Activated T-helper 1 cell treated with anti-CD3 and anti-CD28 coated beads, Interleukin-12 subunit alpha, Interleukin-12 subunit beta, Interleukin-2, Interleukin-4 antibody, amounts not matched to agents 30 ng/mL and 10 ng/mL and 1 ng/mL, durations not matched to agents 14 hours and 24 hours and 36 hours (primary cell): ENCODE measurements at regions of chr19 and their contacts with region 1.

Region 1: DNA sequence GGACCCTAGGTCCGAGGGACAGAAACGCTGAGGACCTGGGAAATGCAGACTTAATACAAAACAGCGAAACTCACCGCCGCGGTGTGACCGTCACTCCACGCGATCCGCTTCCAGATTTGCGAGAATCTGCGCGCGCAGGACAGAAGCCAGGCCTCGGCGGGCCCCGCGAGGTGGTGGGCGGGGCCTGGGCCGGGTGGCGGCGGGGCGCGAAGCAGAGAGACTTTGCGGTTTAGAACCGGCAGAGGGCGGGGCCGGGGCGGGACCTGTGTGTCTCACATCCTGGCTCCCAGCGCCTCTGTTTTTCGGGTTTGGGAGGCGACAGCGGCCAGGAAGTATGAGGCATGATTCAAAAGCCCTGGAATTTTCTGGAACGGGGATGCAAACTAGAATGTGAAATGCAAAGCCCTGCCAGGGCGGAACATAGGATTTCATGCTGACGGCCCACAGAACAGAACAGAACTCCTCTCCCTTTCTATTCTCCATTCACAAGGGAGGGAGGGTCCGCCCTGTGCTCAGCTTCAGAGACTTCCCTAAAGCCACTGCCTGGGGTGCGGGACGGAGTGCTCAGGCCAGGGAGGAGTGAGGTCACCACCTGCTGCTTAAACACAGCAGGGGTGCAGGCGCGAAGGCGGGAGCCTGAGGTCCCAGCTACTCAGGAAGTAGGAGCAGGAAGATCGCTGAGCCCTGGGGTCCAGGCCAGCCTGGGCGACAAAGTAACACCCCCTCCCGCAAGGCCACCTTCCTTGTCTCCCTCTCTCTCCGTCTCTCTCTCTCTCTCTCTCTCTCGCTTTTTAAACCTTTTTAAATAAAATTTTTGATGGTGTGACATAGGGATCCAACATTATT is 44.3 kb downstream of the ZNF611 start:
- DNase-seq: peak; percentile 90
- H3K4me3 Mint-ChIP-seq: peak overlapping the region; percentile 94
- H3K27ac Mint-ChIP-seq: peak overlapping the region; percentile 97
- H3K4me1 Mint-ChIP-seq: peaks cover 33% of the 10 kb centered on the region
- H3K27me3 Mint-ChIP-seq: no peaks in the 10 kb centered on the region

Region 2: GRCh38 chr19:51926784-51927742 is 763.5 kb before region 1 on chr19 and contains the start of gene ZNF613:
- intact Hi-C with region 1: loop called (anchors 1 kb)
- DNase-seq: peak; percentile 73
- H3K4me3 Mint-ChIP-seq: peak within 1 kb of the TSS; percentile 99
- H3K27ac Mint-ChIP-seq: peak within 1 kb of the TSS; percentile 94
- H3K4me1 Mint-ChIP-seq: peaks cover 23% of the 10 kb centered on the region
- H3K27me3 Mint-ChIP-seq: no peaks in the 10 kb centered on the region
- total RNA-seq, gene ZNF613: 3.1 and 3.8 TPM in 2 replicates

Region 3: GRCh38 chr19:52570000-52570861 is 120.4 kb before region 1 on chr19 and contains the start of gene ZNF701:
- intact Hi-C with region 1: loop called (anchors 1 kb)
- DNase-seq: peak; percentile 94
- H3K4me3 Mint-ChIP-seq: peak within 1 kb of the TSS; percentile 94
- H3K27ac Mint-ChIP-seq: peak within 1 kb of the TSS; percentile 94
- H3K4me1 Mint-ChIP-seq: peaks cover 20% of the 10 kb centered on the region
- H3K27me3 Mint-ChIP-seq: no peaks in the 10 kb centered on the region
- total RNA-seq, gene ZNF701: 16.0 and 18.3 TPM in 2 replicates

Region 4: GRCh38 chr19:52853880-52854279 is 163.3 kb after region 1 on chr19:
- intact Hi-C with region 1: no loop called
- DNase-seq: no peak
- H3K4me3 Mint-ChIP-seq: no peak overlapping the region
- H3K27ac Mint-ChIP-seq: no peak overlapping the region
- H3K4me1 Mint-ChIP-seq: peaks cover 22% of the 10 kb centered on the region
- H3K27me3 Mint-ChIP-seq: no peaks in the 10 kb centered on the region

Region 5: DNA sequence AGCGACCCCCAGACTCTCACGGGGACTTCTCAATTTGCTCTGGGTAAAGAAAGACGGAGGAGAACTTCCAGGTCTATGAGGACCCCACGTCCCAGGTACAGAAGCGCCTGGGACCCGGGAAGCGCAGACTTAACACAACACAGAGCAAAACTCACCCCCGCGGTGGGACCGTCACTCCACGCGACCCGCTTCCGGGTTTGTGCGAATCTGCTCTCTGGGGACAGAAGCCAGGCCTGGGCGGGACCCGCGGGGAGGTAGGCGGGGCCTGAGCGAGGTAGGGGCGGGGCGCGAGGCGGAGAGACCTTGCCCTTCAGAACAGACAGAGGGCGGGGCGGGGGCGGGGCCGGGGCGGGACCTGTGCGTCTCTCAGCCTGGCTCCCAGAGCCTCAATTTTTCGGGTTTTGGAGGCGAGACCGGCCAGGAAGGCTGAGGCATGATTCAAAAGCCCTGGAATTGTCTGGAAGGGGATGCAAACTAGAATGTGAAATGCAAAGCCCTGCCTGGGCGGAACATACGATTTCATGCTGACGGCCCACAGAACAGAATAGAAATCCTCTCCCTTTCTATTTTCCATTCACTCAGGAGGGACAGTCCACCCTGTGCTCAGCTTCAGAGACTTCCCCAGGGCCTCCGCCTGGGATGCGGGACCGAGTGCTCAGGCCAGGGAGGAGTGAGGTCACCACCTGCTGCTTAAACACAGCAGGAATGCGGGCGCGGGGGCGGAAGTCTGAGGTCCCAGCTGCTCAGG is 252.0 kb after region 1 on chr19:
- intact Hi-C with region 1: loop called (anchors 1 kb)
- DNase-seq: peak; percentile 94
- H3K4me3 Mint-ChIP-seq: peak overlapping the region; percentile 89
- H3K27ac Mint-ChIP-seq: peak overlapping the region; percentile 88
- H3K4me1 Mint-ChIP-seq: peaks cover 27% of the 10 kb centered on the region
- H3K27me3 Mint-ChIP-seq: peaks cover 2% of the 10 kb centered on the region

Region 6: DNA sequence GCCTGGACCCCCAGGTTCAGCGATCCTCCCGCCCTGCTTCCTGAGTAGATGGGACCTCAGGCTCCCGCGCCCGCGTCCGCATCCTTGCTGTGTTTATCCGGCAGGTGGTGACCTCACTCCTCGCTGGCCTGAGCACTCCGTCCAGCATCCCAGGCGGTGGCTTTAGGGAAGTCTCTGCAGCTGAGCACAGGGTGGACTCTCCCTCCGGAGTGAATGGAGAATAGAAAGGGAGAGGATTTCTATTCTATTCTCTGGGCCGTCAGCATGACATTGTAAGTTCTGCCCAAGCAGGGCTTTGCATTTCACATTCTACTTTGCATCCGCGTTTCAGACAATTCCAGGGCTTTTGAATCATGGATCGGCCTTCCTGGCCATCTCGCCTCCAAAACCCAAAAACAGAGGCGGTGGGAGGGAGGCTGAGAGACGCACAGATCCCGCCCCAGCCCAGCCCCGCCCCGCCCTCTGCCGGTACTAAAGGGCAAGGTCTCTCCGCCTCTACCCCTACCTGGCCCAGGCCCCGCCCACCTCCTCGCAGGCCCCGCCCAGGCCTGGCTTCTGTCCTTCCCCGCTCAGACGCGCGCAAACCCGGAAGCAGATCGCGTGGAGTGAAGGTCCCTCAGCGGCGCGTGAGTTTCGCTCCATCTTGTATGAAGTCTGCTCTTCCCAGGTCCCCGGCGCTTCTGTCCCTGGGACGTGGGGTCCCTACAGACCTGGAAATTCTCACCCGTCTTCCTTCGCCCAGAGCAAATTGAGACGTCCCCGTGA is 674.7 kb after region 1 on chr19 and contains the start of gene ZNF525:
- intact Hi-C with region 1: loop called (anchors 1 kb)
- DNase-seq: peak; percentile 93
- H3K4me3 Mint-ChIP-seq: peak within 1 kb of the TSS; percentile 93
- H3K27ac Mint-ChIP-seq: peak within 1 kb of the TSS; percentile 91
- H3K4me1 Mint-ChIP-seq: peaks cover 17% of the 10 kb centered on the region
- H3K27me3 Mint-ChIP-seq: no peaks in the 10 kb centered on the region
- total RNA-seq, gene ZNF525: 16.5 and 19.0 TPM in 2 replicates